Psoas muscle (tissue), 8 donors: ENCODE measurements at regions of chr7 and their contacts with region 1.

Region 1: DNA sequence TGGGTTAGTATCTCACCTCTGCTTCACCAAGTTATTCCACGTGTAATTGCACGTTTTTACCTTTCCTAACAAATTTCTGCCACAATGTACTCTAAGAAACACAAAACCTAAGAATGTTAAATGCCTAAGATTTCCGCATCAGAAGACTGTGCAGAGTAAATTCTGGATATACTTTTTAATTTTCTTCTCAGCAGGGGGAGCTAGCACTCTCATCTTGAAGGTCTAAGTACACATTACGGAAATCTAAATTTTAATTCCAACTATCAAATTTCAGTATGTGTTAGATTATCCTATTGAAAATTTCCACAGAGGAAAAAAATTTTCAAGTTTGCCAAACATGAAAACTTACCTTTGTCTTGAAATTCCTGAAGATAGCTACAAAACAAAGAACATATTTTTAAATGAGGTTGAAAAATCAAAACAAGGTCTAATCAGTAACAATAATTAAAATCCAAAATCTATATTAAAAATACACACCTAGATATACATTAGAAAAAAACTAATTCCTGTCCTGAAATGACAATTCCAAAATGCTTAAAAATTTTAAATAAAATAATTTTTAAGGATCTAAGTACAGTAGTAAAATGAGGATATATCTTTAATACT is 10.5 kb downstream of the SKAP2 start:
- DNase-seq: no peak
- ATAC-seq: peak; percentile 51 to 85 (median 68)
- H3K4me3 ChIP-seq: no peak overlapping the region
- H3K27ac ChIP-seq: peak overlapping the region; percentile 10
- H3K4me1 ChIP-seq: peaks cover 5% of the 10 kb centered on the region
- H3K27me3 ChIP-seq: peaks cover 5 to 11% (median 10%) of the 10 kb centered on the region in 3 donors
- CTCF ChIP-seq: peak; percentile 62

Region 2: DNA sequence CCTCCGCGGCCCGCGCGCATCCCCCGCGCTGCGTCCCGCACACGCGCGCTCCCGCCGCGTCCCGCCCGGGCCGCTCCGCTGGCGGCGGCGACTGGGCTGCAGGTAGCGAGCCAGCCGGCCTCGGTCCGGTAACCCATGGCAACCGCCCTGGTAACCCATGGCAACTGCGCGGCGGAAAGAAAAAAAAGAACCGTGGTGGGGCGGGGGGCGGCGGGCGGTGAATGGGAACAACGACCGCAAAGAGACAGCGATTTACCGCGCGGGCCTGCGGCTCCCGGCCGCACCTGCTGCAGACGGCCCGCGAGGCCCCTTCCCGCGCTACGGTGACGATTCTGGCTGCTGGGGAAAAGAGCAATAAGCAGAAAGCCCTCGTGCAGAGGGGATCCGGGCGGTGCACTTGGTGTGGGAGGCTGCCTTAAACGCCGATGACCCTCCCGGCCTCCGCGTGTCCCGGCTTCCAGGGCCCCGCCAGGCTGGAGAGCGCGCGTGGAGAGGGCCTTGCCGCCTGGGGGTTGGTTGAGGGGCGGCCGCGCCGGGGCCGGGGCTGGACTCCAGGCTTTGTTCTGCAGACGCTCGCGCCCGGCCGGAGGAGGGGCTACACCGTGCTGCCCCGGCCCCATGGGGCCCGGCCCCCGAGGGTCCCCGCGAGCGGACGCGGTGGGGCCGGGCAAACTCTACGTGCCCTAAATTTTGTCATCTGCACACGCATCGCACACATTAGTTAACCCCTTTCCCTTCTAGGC is 477.5 kb before region 1 on chr7:
- intact Hi-C with region 1: loop called in 1 of 2 experiments (anchors 10 kb)
- DNase-seq: peak; percentile 28 to 60
- ATAC-seq: peak; percentile 25 to 47 (median 43)
- H3K4me3 ChIP-seq: peak overlapping the region; percentile 55
- H3K27ac ChIP-seq: no peak overlapping the region
- H3K4me1 ChIP-seq: peaks cover 5% of the 10 kb centered on the region
- H3K27me3 ChIP-seq: peaks cover 6 to 81% (median 19%) of the 10 kb centered on the region in 3 donors
- CTCF ChIP-seq: no peak

Region 3: DNA sequence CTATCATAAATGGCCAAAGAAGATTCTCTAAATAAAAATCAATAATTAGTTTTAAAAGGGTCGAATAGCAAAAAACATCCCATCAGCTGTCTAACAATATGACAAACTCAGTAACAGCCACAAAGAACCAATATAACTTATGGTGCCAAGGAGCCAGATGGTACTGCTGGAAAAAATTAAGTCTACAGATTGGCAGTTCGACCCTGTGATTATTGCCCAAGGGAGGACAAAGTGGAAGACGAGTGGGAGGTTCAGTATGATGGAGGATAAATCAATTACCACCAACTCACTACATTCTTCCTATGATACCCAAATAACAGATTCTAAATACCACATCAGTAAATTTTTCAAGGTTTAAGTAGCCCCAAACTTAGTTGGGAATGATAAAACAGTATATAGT is 38.5 kb before region 1 on chr7:
- intact Hi-C with region 1: no loop called
- DNase-seq: no peak
- ATAC-seq: no peak
- H3K4me3 ChIP-seq: no peak overlapping the region
- H3K27ac ChIP-seq: no peak overlapping the region
- H3K4me1 ChIP-seq: no peaks in the 10 kb centered on the region
- H3K27me3 ChIP-seq: no peaks in the 10 kb centered on the region
- CTCF ChIP-seq: no peak

Region 4: GRCh38 chr7:27143023-27143949 is 289.4 kb after region 1 on chr7 and contains the start of gene HOXA5:
- intact Hi-C with region 1: loop called in 1 of 2 experiments (anchors 5 kb)
- DNase-seq: peak; percentile 84 to 86
- ATAC-seq: peak; percentile 51 to 92 (median 76)
- H3K4me3 ChIP-seq: peak within 1 kb of the TSS; percentile 74
- H3K27ac ChIP-seq: peak within 1 kb of the TSS; percentile 83
- H3K4me1 ChIP-seq: peaks cover 13% of the 10 kb centered on the region
- H3K27me3 ChIP-seq: no peaks in the 10 kb centered on the region
- CTCF ChIP-seq: peak; percentile 71
- total RNA-seq, gene HOXA5: 4.7 to 18.8 (median 8.1) TPM